PC-9 (cell line): ENCODE measurements at regions of chr2 and their contacts with region 1.

Region 1: GRCh38 chr2:131673392-131674173 is 145.9 kb downstream of the CCDC74A start:
- DNase-seq: peak in 1 of 2 experiments; percentile 66
- H3K4me3 ChIP-seq: no peak overlapping the region
- H3K27ac ChIP-seq: no peak overlapping the region
- H3K4me1 ChIP-seq: no peaks in the 10 kb centered on the region
- H3K27me3 ChIP-seq: peaks cover 32% of the 10 kb centered on the region
- CTCF ChIP-seq: peak; percentile 79

Region 2: DNA sequence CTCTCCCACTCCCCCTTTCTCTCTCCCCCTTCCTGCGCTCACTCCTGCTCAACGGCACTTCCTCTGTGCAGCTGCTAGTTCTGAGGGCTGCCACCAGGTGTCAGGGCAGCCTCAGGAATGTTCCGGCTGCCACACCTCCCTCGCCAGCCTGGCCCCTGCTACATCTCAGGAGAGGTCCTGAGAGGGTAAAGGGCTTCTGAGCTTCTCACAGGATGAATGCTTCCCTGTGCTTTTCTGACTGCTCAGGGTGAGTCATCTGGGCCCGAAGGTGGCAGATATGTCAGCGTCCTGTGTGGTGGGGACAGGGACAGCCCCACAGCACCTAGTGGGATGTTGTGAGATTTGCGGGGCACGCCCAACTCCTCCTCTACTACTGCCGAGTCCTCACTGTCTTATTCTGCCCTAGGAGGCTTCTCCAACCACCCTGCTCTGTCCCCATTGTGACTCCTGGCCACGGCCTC is 519.5 kb before region 1 on chr2:
- CTCF ChIA-PET with region 1: interaction called, 11 read pairs
- POLR2A ChIA-PET with region 1: no interaction called
- intact Hi-C with region 1: no loop called
- DNase-seq: peak; percentile 61 to 62
- H3K4me3 ChIP-seq: no peak overlapping the region
- H3K27ac ChIP-seq: no peak overlapping the region
- H3K4me1 ChIP-seq: no peaks in the 10 kb centered on the region
- H3K27me3 ChIP-seq: peaks cover 17% of the 10 kb centered on the region
- CTCF ChIP-seq: peak; percentile 89

Region 3: GRCh38 chr2:131413148-131413747 is 260.3 kb before region 1 on chr2:
- CTCF ChIA-PET with region 1: no interaction called
- POLR2A ChIA-PET with region 1: no interaction called
- intact Hi-C with region 1: loop called (anchors 2 kb)
- DNase-seq: no peak
- H3K4me3 ChIP-seq: no peak overlapping the region
- H3K27ac ChIP-seq: no peak overlapping the region
- H3K4me1 ChIP-seq: no peaks in the 10 kb centered on the region
- H3K27me3 ChIP-seq: peaks cover 74% of the 10 kb centered on the region
- CTCF ChIP-seq: peak; percentile 84

Region 4: GRCh38 chr2:131492418-131493198 is 181.0 kb before region 1 on chr2:
- CTCF ChIA-PET with region 1: interaction called, 11 read pairs
- POLR2A ChIA-PET with region 1: no interaction called
- intact Hi-C with region 1: no loop called
- DNase-seq: peak; percentile 91 to 96
- H3K4me3 ChIP-seq: peak overlapping the region; percentile 80
- H3K27ac ChIP-seq: peak overlapping the region; percentile 72
- H3K4me1 ChIP-seq: no peaks in the 10 kb centered on the region
- H3K27me3 ChIP-seq: no peaks in the 10 kb centered on the region
- CTCF ChIP-seq: peak; percentile 87

Region 5: DNA sequence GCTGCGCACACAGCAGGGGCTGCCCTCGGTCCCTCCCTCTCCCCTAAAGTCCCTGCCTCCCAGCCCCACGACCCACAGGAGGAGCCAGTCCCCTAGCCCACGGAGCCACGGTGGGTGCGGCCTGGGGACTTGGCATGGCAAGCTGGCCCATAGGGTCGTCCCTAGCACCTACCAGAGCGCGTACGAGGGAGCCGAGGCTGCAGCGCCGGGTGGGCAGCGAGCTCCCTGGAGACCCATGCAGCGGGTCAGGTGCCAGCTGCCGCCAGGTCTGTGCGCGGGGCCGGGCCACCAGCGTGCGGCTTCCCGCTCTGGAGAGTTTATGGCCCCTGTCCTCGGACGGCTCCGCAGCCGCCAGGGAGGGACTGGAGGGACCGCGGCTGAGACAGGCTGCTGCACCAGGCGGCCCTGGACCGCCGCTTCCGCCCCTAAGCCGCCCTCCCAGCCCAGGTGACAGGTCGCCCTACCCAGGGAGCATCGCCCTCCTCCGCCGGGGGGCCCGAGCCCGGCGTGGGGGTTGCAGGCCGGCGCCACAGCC is 127.7 kb after region 1 on chr2:
- CTCF ChIA-PET with region 1: no interaction called
- POLR2A ChIA-PET with region 1: no interaction called
- intact Hi-C with region 1: loop called (anchors 1 kb)
- DNase-seq: no peak
- H3K4me3 ChIP-seq: no peak overlapping the region
- H3K27ac ChIP-seq: no peak overlapping the region
- H3K4me1 ChIP-seq: no peaks in the 10 kb centered on the region
- H3K27me3 ChIP-seq: no peaks in the 10 kb centered on the region
- CTCF ChIP-seq: no peak